Transverse colon (tissue), 4 donors: ENCODE measurements at regions of chr1 and their contacts with region 1.

Region 1: DNA sequence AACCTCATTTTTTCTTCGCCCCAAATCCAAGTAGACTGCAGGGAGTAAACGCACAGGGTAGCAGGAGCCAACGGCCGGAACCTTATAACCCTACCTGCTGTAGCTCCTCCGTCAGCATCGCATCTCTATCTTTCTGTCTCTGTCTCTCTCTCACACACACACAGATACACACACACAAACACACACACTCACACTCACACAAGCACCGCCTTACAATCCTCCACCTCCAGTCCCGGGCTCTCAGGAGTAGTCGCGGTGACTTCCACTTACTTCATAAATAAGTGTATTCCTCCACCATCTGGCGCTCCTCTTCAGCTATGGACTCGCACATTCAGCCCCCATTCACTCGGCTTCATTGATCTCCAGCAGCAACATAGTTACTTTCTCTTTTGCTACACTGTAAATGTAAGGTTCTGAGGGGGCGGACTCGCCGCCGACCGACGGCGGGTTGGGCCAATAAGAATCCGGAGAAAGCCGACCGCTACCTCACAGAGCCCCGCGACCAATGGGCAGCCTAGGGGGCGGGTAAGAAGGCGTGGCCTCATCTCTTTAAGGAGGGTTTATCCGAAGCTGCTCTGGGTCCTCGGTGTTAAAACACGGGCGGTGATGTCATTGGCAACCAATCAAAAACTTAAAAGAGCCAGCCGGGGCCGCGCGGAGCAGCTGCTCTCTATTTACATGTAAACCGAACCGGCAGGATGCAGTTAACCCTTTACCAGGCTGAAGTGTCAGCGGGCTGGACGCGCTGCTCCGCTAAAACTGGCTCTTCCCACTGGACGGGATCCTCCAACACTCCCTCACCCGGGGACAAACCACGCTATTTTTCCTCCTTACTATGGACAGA is at the start of gene DUSP10:
- DNase-seq: peak; percentile 99
- H3K4me3 ChIP-seq: peak within 1 kb of the TSS; percentile 62 to 81 (median 71)
- H3K27ac ChIP-seq: peak within 1 kb of the TSS; percentile 97 to 99 (median 99)
- H3K4me1 ChIP-seq: peaks cover 3 to 43% (median 18%) of the 10 kb centered on the region in 4 donors
- H3K27me3 ChIP-seq: no peaks in the 10 kb centered on the region
- CTCF ChIP-seq: no peak
- EP300 ChIP-seq: no peak
- POLR2A ChIP-seq: peak; percentile 92
- total RNA-seq, gene DUSP10: 1.6 to 7.2 (median 4.9) TPM

Region 2: DNA sequence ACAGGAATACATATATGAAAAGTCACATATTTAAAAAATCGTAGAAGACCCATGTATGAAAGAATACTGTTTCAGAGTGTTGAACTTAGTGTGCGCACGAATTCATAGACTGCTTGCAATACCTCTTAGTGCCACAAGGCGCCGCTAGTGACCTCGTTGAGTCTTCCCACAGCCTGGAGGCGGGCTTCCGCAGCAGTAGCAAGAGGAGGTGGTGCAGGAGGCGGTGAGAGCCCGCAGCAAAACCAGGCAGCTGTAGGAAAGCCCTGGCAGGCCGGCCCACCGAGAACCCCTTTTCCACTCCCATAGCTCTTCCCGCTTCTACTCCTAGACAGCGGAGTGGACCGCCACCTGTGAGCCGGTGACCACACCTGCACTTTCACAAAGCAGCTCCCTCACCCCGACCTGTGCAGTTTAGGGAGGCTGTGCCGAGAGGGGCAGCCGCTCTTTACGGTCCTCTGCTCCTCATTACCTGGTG is 931.7 kb before region 1 on chr1:
- in situ Hi-C with region 1: loop called in 1 of 4 experiments (anchors 25 kb)
- intact Hi-C with region 1: no loop called
- DNase-seq: peak; percentile 73
- H3K4me3 ChIP-seq: no peak overlapping the region
- H3K27ac ChIP-seq: peak overlapping the region in 2 of 4 donors; percentile 26 to 36
- H3K4me1 ChIP-seq: peaks cover 0 to 19% (median 4%) of the 10 kb centered on the region in 4 donors
- H3K27me3 ChIP-seq: no peaks in the 10 kb centered on the region
- CTCF ChIP-seq: peak; percentile 80 to 88 (median 84)
- EP300 ChIP-seq: no peak
- POLR2A ChIP-seq: no peak

Region 3: GRCh38 chr1:221294244-221294643 is 447.7 kb before region 1 on chr1:
- in situ Hi-C with region 1: no loop called
- intact Hi-C with region 1: no loop called
- DNase-seq: no peak
- H3K4me3 ChIP-seq: no peak overlapping the region
- H3K27ac ChIP-seq: no peak overlapping the region
- H3K4me1 ChIP-seq: no peaks in the 10 kb centered on the region
- H3K27me3 ChIP-seq: no peaks in the 10 kb centered on the region
- CTCF ChIP-seq: no peak
- EP300 ChIP-seq: no peak
- POLR2A ChIP-seq: no peak

Region 4: DNA sequence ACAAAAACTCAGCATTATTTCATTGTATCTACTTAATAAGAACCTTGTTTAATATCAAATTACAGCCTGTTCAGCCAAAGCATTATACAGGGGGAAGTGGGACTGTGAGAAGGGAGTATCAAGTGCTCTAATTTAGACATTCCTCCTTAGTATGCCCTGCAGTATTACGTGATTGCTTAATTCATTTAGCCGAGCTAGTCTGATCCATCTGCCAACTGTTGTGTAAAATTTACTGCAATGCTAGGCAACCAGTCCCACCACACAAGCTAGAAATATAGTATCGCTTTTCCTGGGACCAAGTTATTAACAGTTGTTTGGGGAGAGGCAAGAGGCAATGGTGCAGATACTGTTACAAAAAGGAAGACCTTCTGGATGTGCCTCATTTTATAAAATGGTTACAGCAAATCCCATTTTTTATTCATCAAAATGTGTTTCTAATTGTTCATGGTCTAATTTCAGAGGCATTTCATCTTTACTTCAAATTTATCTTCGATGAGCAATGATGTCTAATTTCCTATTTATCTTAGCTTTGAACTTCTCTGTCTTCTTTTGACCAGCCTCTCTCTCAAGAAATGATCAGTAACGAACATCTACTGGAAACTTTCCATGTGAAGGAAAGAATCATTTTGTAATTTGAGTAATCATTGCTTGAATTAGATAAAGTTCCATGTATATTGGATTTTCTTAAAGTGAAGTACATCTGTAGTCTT is 283.3 kb before region 1 on chr1:
- in situ Hi-C with region 1: no loop called
- intact Hi-C with region 1: loop called (anchors 10 kb)
- DNase-seq: no peak
- H3K4me3 ChIP-seq: no peak overlapping the region
- H3K27ac ChIP-seq: peak overlapping the region; percentile 43 to 73 (median 58)
- H3K4me1 ChIP-seq: no peaks in the 10 kb centered on the region
- H3K27me3 ChIP-seq: no peaks in the 10 kb centered on the region
- CTCF ChIP-seq: no peak
- EP300 ChIP-seq: no peak
- POLR2A ChIP-seq: no peak

Region 5: GRCh38 chr1:221543529-221544120 is 198.3 kb before region 1 on chr1:
- in situ Hi-C with region 1: no loop called
- intact Hi-C with region 1: loop called (anchors 10 kb)
- DNase-seq: no peak
- H3K4me3 ChIP-seq: no peak overlapping the region
- H3K27ac ChIP-seq: no peak overlapping the region
- H3K4me1 ChIP-seq: no peaks in the 10 kb centered on the region
- H3K27me3 ChIP-seq: peaks cover 3% of the 10 kb centered on the region
- CTCF ChIP-seq: peak; percentile 16 to 37 (median 22)
- EP300 ChIP-seq: no peak
- POLR2A ChIP-seq: no peak

Region 6: DNA sequence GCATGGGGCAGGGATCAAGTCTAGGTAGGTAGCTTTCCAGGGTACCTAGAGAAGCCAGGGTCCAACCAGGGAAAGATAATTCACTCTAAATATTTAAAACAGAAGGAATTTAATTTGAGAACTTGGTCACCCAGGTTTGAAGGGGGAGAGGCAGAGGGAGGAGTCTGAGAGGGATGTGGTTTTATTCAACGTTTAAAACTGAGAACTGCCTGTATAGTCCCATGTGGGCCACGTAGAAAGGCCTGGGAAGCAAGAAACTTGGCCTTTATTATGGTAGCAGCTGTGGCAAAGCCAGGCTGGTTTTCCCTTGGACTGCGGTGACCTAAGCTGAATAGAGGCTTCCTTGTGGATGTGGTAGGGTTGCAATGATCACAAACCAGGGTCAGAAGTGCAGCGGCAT is 42.0 kb after region 1 on chr1:
- in situ Hi-C with region 1: no loop called
- intact Hi-C with region 1: no loop called
- DNase-seq: no peak
- H3K4me3 ChIP-seq: no peak overlapping the region
- H3K27ac ChIP-seq: no peak overlapping the region
- H3K4me1 ChIP-seq: no peaks in the 10 kb centered on the region
- H3K27me3 ChIP-seq: no peaks in the 10 kb centered on the region
- CTCF ChIP-seq: no peak
- EP300 ChIP-seq: no peak
- POLR2A ChIP-seq: no peak

Region 7: GRCh38 chr1:222643938-222644635 is 902.2 kb after region 1 on chr1:
- in situ Hi-C with region 1: loop called in 1 of 4 experiments (anchors 25 kb)
- intact Hi-C with region 1: no loop called
- DNase-seq: peak; percentile 99
- H3K4me3 ChIP-seq: peak overlapping the region; percentile 65 to 72 (median 68)
- H3K27ac ChIP-seq: peak overlapping the region; percentile 92 to 99 (median 94)
- H3K4me1 ChIP-seq: peaks cover 3 to 19% (median 11%) of the 10 kb centered on the region in 4 donors
- H3K27me3 ChIP-seq: no peaks in the 10 kb centered on the region
- CTCF ChIP-seq: no peak
- EP300 ChIP-seq: peak; percentile 37
- POLR2A ChIP-seq: peak; percentile 88